ENCODE measurements at regions of chr5 and their contacts with region 1.

Region 1: GRCh38 chr5:134176511-134177368 is at the start of gene SKP1:
- DNase-seq: peak; percentile 93
- total RNA-seq, gene SKP1: 494 TPM

Region 2: DNA sequence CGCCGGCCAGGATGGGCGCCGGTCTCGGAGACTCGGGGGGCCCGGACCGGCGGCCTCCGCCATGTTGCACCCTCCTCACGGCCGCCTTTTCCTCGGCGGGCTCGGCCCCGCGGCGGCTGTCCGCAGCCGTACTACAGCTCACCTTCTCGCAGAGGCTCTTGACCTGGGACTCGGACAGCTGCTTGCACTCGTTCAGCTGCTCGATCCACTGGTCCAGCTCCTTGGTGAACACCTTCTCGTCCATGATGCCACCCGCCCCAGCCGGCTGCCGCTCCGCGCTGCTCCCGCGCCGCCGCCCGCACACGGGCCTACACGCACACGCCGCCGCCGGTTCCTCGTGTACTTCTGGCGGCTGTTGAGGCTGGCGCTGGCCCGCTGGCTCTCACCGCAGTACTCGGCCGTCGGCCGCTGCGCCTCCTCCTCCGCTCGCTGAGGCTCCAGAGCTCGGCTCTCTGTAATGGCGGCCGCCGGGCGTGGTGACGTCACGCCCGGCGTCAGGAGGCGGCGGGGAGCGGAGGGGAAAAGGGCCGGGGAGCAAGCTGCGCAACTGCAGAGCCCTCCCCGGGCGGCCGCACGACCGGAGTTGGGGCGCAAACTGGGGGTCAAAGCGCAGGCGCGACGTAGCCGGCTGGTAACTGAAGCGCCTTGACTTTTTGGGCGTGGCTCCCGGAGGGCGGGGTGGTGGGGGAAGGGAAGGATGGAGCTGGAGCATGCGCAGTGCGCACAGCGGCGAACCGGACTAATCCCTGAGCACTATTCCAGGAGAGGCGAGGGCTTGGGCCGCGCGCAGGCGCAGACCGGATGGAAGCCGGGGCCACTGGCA is 49.1 kb after region 1 on chr5 and contains the start of gene PPP2CA:
- intact Hi-C with region 1: loop called (anchors 2 kb)
- DNase-seq: peak; percentile 100
- total RNA-seq, gene PPP2CA: 214 TPM

Region 3: GRCh38 chr5:134267366-134268018 is 90.8 kb after region 1 on chr5:
- intact Hi-C with region 1: no loop called
- DNase-seq: no peak

Region 4: GRCh38 chr5:134365604-134366003 is 188.9 kb after region 1 on chr5:
- intact Hi-C with region 1: loop called (anchors 5 kb)
- DNase-seq: no peak

Region 5: DNA sequence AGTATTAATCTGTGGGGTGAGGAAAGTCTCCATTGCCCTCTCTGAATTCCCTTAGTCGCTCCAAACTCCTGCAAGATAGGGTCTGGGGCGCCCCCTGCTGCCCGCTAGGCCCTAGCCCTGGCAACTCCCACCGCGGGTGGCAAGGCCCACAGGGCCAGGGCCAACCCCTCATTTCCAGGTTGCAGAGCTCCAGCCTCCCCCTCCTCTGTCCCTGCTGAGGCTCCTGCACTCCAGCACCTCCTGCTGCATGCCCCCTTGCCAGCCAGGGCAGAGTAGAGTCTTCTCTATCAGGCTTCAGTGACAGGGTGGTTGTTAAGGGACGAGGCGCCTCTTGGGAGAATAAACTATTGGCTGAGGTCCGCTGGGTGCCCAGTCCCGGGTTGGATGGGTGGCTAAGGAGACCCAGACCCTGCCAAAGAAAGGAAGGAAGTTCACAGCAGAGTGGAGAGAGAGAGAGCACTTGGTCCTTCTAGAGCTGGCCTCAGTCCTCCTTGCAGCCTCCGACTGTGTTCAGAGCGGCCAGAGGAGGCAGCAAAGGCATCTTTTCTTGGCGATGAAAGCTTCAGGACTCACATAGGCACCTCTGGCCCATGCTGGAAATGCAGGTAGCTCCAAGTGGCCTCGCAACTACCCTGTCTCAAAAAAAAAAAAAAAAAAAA is 410.3 kb after region 1 on chr5:
- intact Hi-C with region 1: loop called (anchors 10 kb)
- DNase-seq: peak; percentile 91

Measured in cardiac septum (tissue), 1 donor.